H1 (cell line): ENCODE measurements at regions of chr9 and their contacts with region 1.

Region 1: DNA sequence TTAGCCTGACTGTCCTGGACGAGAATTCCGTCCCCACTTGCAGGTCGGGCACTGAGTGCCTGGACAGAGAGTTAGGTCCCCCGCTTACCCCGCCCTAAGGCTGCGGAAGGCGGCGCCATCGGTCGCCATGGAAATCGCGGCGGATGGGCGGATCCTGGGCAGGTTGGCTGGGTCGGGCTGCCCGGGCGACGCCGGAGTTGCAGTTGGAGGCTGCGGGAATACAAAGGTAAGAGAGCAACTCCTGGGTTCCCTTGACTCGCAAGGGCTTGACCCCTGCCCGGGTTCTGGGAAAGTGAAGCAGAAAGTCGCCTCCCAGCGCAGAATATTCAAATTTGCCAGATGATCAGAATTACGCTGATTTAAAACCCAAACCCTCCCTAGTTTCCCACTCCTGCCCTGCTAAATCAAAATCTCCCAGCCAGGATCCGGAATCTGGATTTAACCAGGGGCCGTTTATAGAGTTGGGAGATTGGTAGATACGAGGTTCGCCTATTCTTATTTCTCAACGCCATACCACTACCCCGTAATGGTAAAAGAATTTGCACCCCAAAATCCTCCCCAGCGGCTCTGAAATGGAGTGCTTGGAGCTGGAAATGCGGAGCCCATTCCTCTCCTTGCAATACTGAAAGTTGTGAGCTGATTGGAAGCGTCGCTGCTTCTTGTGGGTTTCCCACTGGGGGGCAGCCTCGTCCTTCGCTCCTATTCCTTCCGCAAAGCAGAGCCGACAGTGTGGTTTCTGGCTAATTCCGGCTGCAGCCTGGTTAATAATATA is 156.4 kb upstream of the RASEF start:
- DNase-seq: peak; percentile 79 to 93
- H3K4me3 ChIP-seq: peak overlapping the region; percentile 47 to 76 (median 66)
- H3K27ac ChIP-seq: no peak overlapping the region
- H3K4me1 ChIP-seq: peaks cover 0 to 3% (median 0%) of the 10 kb centered on the region in 4 experiments; a peak in 2 of 7 replicates
- H3K27me3 ChIP-seq: no peaks in the 10 kb centered on the region
- CTCF ChIP-seq: peak; percentile 65 to 86 (median 78)
- EP300 ChIP-seq: no peak
- POLR2A ChIP-seq: no peak
- RAD21 ChIP-seq: peak; percentile 94 to 97

Region 2: GRCh38 chr9:83012922-83013838 is 206.2 kb before region 1 on chr9:
- CTCF ChIA-PET with region 1: no interaction called
- POLR2A ChIA-PET with region 1: no interaction called
- DNase-seq: no peak
- H3K4me3 ChIP-seq: no peak overlapping the region
- H3K27ac ChIP-seq: no peak overlapping the region
- H3K4me1 ChIP-seq: no peaks in the 10 kb centered on the region
- H3K27me3 ChIP-seq: no peaks in the 10 kb centered on the region
- CTCF ChIP-seq: no peak
- EP300 ChIP-seq: no peak
- POLR2A ChIP-seq: no peak
- RAD21 ChIP-seq: no peak

Region 3: DNA sequence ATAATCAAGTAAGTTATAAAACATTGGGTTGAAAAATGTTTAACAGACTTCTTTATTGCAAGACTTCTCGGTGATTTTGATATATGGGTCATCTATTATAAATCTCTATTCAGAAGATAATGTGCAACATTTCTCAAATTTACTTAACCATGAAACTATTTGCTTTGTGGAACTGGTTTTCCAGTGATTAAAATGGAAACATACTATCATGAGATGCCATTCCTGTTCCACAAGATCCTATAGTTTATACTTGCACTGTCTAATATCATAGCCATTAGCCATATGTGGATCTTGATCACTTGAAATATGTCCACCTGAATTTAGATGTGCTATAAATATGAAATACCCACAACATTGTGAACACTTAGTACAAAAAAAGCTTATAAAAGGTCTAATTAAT is 125.4 kb before region 1 on chr9:
- CTCF ChIA-PET with region 1: no interaction called
- POLR2A ChIA-PET with region 1: no interaction called
- DNase-seq: no peak
- H3K4me3 ChIP-seq: no peak overlapping the region
- H3K27ac ChIP-seq: no peak overlapping the region
- H3K4me1 ChIP-seq: no peaks in the 10 kb centered on the region
- H3K27me3 ChIP-seq: no peaks in the 10 kb centered on the region
- CTCF ChIP-seq: no peak
- EP300 ChIP-seq: no peak
- POLR2A ChIP-seq: no peak
- RAD21 ChIP-seq: no peak

Region 4: DNA sequence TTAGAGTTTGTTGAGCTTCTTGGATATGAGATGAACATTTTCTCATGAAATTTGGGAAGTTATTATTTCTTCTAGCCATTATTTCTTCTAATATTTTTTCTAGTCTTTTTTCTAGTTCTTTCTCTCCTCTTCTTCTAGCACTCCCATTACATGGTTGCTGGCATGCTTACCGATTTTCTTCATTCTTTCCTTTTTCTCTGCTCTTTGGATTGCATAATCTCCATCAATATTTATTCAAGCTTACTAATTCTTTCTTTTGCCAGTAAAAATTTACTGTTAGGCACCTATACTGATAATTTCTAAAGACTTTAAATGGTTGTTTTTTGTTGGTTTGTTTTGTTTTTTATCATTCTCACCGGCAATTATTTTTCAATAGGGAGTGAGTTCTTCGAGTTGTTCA is 41.6 kb before region 1 on chr9:
- CTCF ChIA-PET with region 1: no interaction called
- POLR2A ChIA-PET with region 1: no interaction called
- DNase-seq: no peak
- H3K4me3 ChIP-seq: no peak overlapping the region
- H3K27ac ChIP-seq: no peak overlapping the region
- H3K4me1 ChIP-seq: no peaks in the 10 kb centered on the region
- H3K27me3 ChIP-seq: no peaks in the 10 kb centered on the region
- CTCF ChIP-seq: no peak
- EP300 ChIP-seq: no peak
- POLR2A ChIP-seq: no peak
- RAD21 ChIP-seq: no peak

Region 5: DNA sequence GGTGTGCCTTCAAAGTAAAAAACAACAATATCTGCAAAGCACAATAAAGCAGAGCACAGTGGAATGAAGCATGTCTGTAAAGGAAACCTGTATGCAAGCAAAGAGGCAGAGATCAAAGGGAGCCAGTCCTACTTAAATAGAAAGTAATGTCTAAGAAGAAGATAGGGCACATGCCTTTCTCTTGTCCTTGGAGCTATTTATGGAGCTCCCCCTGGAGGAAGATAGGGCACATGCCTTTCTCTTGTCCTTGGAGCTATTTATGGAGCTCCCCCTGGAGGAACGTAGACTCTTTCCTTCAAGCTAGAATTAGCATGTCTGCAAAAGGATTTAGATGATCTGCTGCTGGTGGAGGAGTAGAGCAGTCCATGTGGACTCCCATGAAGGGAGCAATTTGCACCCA is 11.7 kb after region 1 on chr9:
- CTCF ChIA-PET with region 1: interaction called, 25 read pairs
- POLR2A ChIA-PET with region 1: interaction called, 5 read pairs
- DNase-seq: no peak
- H3K4me3 ChIP-seq: no peak overlapping the region
- H3K27ac ChIP-seq: no peak overlapping the region
- H3K4me1 ChIP-seq: peaks cover 0 to 3% (median under 1%) of the 10 kb centered on the region in 4 experiments; a peak in 2 of 7 replicates
- H3K27me3 ChIP-seq: no peaks in the 10 kb centered on the region
- CTCF ChIP-seq: peak in 1 of 3 experiments; percentile 21; a peak in 1 of 4 replicates
- EP300 ChIP-seq: no peak
- POLR2A ChIP-seq: no peak
- RAD21 ChIP-seq: no peak

Region 6: DNA sequence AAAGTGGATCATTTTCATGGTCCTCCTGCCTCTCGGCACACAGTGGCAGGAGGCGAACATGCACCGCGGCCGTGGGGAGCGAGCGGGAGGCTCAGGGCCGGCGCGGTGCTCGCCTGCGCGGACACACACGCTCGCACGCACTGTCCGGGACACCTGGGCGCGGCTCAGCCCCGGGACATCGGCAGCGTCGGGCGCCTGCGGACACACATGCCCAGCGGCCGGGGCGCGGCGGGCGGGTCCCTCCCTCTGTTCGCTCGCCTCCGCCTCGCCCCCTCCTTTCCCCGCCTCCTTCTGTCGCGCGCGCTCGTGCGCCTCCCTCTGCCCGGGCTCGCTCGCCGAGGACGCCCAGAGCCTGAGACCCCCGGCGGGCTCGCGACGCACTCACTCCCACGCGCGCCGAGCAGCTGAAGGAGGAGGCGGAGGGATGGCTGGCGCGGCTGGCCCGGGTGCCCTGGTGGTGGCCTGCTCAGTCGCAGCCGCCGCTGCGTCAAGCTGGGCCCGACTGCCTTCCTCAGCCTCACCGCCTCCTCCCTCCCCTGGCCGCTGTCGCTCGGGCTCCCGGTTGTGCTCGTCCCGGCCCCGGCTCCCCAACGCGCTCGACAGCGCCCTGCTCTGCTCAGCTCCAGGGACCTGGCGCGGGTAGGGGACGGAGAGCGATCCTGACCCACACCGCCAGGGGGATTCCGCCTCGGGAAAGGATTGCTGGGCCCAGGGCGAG is 319.0 kb after region 1 on chr9 and contains the start of gene FRMD3:
- CTCF ChIA-PET with region 1: interaction called, 34 read pairs
- POLR2A ChIA-PET with region 1: no interaction called
- DNase-seq: peak; percentile 38 to 82
- H3K4me3 ChIP-seq: peak within 1 kb of the TSS; percentile 41 to 69 (median 47)
- H3K27ac ChIP-seq: no peak within 1 kb of the TSS
- H3K4me1 ChIP-seq: peaks cover 0 to 10% (median 4%) of the 10 kb centered on the region in 4 experiments; a peak in 6 of 7 replicates
- H3K27me3 ChIP-seq: peaks cover 20 to 51% (median 40%) of the 10 kb centered on the region in 4 experiments
- CTCF ChIP-seq: peak; percentile 68 to 82 (median 72)
- EP300 ChIP-seq: no peak
- POLR2A ChIP-seq: no peak
- RAD21 ChIP-seq: peak; percentile 33 to 58; a peak in 3 of 4 replicates
- total RNA-seq, gene FRMD3: 1.3 and 1.4 TPM in 2 replicates